Activated CD4-positive, alpha-beta memory T cell treated with anti-CD3 and anti-CD28 coated beads for 36 hours (primary cell): ENCODE measurements at regions of chr1 and their contacts with region 1.

Region 1: DNA sequence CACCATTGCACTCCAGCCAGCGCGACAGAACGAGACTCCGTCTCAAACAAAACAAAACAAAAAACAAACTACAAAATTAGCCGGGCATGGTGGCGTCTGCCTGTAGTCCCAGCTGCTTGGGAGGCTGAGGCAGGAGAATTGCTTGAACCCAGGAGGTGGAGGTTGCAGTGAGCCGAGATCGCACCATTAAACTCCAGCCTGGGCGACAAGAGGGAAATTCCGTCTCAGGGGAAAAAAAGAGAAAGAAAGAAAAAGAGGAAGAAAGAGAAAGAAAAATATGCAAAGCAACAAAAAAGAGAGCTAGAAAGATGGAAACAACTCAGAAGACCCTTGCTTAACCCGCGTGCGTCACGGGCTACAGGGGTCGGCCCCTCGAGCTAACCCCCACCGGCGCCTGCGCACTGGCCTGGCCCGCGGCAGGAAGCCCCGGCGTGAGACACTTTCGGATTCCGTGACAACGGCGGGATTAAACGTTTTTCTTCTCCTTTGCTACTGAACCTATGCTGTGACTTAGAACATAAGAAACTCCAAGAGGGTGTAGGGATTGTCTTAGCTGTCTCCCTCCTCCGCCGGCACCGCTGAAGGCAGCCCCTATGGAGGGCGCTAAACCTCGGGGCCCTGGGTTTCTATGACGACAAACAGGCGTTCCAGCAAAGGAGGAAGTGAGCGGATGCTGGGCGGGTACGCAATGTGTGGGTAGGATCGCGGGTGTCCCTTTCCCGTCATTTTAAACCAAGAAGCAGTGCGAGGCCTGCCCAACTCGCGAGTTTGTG is at the start of gene AXDND1:
- DNase-seq: peak; percentile 93
- H3K4me3 Mint-ChIP-seq: peak within 1 kb of the TSS; percentile 95
- H3K27ac Mint-ChIP-seq: peak within 1 kb of the TSS; percentile 100
- H3K4me1 Mint-ChIP-seq: peaks cover 12% of the 10 kb centered on the region
- H3K27me3 Mint-ChIP-seq: no peaks in the 10 kb centered on the region
- total RNA-seq, gene AXDND1: 0.48 to 0.51 TPM

Region 2: DNA sequence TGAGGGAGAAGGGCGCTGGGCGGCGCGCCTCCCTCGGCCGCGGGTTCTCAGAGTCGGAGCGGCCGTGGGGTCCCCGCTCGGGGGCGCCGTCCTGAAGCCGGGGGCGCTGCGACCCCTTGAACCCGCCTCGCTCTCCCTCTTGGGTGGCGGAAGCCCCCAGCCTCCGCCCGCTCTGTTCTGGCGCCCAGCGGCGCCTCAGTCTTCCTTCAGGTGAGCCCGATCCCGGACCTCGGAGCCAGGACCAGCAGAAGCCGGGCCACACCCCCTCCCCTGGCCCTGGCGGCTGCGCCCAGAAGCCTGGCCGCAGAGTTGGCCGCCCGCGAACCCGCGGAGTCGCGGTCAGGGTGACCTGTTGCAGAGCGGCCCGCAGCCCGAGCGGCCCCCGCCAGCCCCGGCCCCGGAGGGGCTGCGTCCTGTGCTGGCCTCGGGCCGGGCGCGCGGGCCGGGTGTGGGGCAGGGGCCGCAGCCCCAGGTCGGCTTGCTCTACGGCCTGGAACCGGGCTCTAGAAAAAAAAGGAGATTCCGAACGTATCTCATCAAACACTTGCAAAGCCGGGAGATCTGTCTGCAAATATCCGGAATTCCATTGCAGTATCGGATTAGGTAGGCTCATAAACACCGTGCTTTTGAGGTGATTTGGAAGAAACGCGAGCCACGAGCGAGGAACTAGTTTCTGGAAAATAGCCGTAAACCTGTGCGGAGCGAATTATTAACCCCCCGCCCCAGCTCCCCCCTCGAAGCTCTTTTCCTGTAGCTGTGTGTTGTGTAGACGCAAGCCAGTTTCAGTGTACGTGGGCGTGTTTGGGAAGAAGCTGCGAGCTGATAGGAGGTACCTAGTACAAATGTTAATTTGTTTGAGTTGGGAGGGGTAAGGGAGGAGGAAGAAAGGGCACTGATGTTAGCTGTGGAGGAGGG is 639.6 kb before region 1 on chr1:
- CTCF ChIA-PET with region 1: no interaction called
- POLR2A ChIA-PET with region 1: no interaction called
- intact Hi-C with region 1: loop called (anchors 5 kb)
- DNase-seq: peak; percentile 67
- H3K4me3 Mint-ChIP-seq: peak overlapping the region; percentile 78
- H3K27ac Mint-ChIP-seq: no peak overlapping the region
- H3K4me1 Mint-ChIP-seq: peaks cover 18% of the 10 kb centered on the region
- H3K27me3 Mint-ChIP-seq: peaks cover 14% of the 10 kb centered on the region

Region 3: GRCh38 chr1:179025125-179025974 is 340.2 kb before region 1 on chr1 and contains the start of gene FAM20B:
- CTCF ChIA-PET with region 1: interaction called, 3 read pairs
- POLR2A ChIA-PET with region 1: interaction called, 3 read pairs
- intact Hi-C with region 1: loop called (anchors 5 kb)
- DNase-seq: peak; percentile 94
- H3K4me3 Mint-ChIP-seq: peak within 1 kb of the TSS; percentile 87
- H3K27ac Mint-ChIP-seq: peak within 1 kb of the TSS; percentile 85
- H3K4me1 Mint-ChIP-seq: peaks cover 37% of the 10 kb centered on the region
- H3K27me3 Mint-ChIP-seq: no peaks in the 10 kb centered on the region
- total RNA-seq, gene FAM20B: 38.1 to 39.2 TPM

Region 4: DNA sequence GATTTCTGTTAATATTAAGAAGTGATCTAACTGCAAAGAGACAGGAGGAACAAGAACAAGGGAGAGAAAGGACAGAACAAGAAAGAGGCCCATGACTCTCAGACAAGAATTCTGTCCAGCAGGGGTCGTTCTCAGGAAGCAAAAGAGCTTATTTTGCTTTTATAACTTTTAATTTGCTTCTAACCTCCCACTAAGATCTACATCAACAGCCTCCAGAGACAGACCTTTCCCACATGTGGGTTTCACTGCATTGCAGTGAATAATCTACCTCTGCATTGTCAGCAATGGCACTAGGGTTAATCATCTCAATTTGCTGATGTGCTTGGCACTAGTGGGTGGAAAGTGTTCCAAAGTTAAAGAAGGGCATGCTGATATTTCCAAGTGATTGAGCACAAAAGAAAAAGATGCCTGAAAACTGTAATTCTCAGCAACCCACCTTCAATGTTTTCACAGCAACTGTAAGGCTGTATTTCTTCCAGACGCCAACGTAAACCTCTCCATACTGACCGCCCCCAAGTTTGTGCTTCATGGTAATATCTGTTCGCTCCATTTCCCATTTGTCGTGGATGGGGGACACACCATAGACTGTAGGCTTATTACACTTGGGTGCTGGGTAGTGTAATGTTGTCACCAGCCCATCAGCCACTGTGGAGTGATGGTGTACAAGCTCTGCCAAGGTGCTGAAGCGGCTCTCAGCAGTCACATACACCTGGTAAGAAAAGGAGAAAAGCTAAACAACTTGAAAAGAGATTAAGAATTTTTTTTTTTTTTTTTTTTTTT is 244.2 kb before region 1 on chr1:
- CTCF ChIA-PET with region 1: interaction called, 61 read pairs
- POLR2A ChIA-PET with region 1: interaction called, 3 read pairs
- intact Hi-C with region 1: loop called (anchors 1 kb)
- DNase-seq: peak; percentile 49
- H3K4me3 Mint-ChIP-seq: no peak overlapping the region
- H3K27ac Mint-ChIP-seq: no peak overlapping the region
- H3K4me1 Mint-ChIP-seq: peaks cover 7% of the 10 kb centered on the region
- H3K27me3 Mint-ChIP-seq: no peaks in the 10 kb centered on the region

Region 5: DNA sequence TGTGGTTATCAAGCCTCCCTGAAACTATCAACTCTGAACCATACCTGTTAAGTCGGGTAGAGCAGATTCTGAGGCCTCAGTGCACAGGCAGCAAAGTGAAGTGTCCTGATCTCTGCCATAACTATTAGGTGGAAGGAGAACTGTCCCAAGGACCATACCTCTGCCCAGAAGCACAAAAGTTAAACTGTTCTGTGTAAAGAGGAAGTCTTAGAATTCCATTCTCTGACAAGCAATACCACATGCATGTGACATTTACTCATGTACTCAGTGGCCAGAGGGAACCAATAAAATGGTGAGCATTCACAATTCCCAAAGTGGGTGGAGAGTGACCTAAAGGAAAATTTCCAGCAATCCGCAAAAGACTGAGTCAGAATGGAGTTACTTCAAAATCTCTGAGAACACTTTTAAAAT is 222.6 kb before region 1 on chr1:
- CTCF ChIA-PET with region 1: no interaction called
- POLR2A ChIA-PET with region 1: no interaction called
- intact Hi-C with region 1: loop called (anchors 1 kb)
- DNase-seq: no peak
- H3K4me3 Mint-ChIP-seq: no peak overlapping the region
- H3K27ac Mint-ChIP-seq: no peak overlapping the region
- H3K4me1 Mint-ChIP-seq: peaks cover 26% of the 10 kb centered on the region
- H3K27me3 Mint-ChIP-seq: no peaks in the 10 kb centered on the region

Region 6: GRCh38 chr1:179251675-179252074 is 113.8 kb before region 1 on chr1:
- CTCF ChIA-PET with region 1: interaction called, 19 read pairs
- POLR2A ChIA-PET with region 1: no interaction called
- intact Hi-C with region 1: loop called (anchors 1 kb)
- DNase-seq: no peak
- H3K4me3 Mint-ChIP-seq: no peak overlapping the region
- H3K27ac Mint-ChIP-seq: no peak overlapping the region
- H3K4me1 Mint-ChIP-seq: no peaks in the 10 kb centered on the region
- H3K27me3 Mint-ChIP-seq: no peaks in the 10 kb centered on the region

Region 7: GRCh38 chr1:179298952-179299351 is 66.6 kb before region 1 on chr1:
- CTCF ChIA-PET with region 1: interaction called, 14 read pairs
- POLR2A ChIA-PET with region 1: interaction called, 3 read pairs
- intact Hi-C with region 1: loop called (anchors 1 kb)
- DNase-seq: peak; percentile 74
- H3K4me3 Mint-ChIP-seq: peak overlapping the region; percentile 0
- H3K27ac Mint-ChIP-seq: peak overlapping the region; percentile 65
- H3K4me1 Mint-ChIP-seq: peaks cover 64% of the 10 kb centered on the region
- H3K27me3 Mint-ChIP-seq: no peaks in the 10 kb centered on the region

Region 8: GRCh38 chr1:179380299-179380698 is 14.8 kb after region 1 on chr1:
- CTCF ChIA-PET with region 1: no interaction called
- POLR2A ChIA-PET with region 1: no interaction called
- intact Hi-C with region 1: no loop called
- DNase-seq: no peak
- H3K4me3 Mint-ChIP-seq: no peak overlapping the region
- H3K27ac Mint-ChIP-seq: no peak overlapping the region
- H3K4me1 Mint-ChIP-seq: no peaks in the 10 kb centered on the region
- H3K27me3 Mint-ChIP-seq: no peaks in the 10 kb centered on the region